PC-9 (cell line): ENCODE measurements at regions of chr5 and their contacts with region 1.

Region 1: DNA sequence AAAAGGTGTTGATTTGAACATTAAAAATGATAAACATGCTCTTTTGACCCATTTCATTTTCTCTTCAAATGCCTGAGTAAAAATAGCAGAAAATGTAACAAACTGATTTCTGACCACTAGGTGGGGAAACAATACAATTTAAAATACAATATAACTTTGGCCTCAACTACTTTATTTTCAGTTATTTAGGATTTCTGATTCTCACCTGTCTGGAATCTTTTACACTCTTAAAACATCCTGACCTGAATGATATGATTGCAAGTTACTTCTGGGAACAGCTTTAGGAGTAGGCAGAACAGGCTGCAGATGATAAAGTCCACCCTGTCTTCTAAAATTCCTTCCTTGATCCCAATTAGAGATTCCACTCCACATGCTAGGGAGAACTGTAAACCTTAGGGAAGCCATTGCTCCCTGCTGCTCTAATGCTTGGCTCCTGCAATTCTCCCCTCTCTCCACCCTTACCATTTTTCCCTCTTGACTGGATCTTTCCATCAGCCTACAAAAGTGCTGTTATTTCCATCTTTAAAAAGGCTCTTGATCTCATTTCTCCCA is 70.3 kb downstream of the FYB1 start:
- DNase-seq: no peak
- H3K4me3 ChIP-seq: no peak overlapping the region
- H3K27ac ChIP-seq: no peak overlapping the region; the same call in 1 of the 2 replicates
- H3K4me1 ChIP-seq: peaks cover 6% of the 10 kb centered on the region
- H3K27me3 ChIP-seq: no peaks in the 10 kb centered on the region
- CTCF ChIP-seq: peak; percentile 76

Region 2: DNA sequence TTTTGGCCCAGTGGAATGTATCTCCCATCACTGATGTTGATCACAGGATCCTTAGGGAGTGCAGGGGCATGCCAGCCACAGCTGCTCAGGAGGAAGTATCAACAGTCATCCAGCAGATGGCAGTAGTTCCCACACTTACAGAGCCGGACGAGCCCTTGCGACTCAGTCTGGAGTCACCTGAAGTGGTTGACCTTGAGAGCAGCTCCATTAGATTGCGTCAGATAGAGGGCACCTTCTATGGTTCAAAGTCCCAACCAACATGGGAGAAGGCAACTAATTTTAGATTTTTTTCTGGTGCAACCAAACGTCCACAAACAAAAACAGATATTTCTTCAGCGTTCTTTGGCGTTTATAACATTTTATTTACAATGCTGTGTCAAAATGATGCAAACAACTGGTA is 766.2 kb before region 1 on chr5:
- CTCF ChIA-PET with region 1: no interaction called
- POLR2A ChIA-PET with region 1: no interaction called
- intact Hi-C with region 1: no loop called
- DNase-seq: peak; percentile 58 to 77
- H3K4me3 ChIP-seq: no peak overlapping the region
- H3K27ac ChIP-seq: no peak overlapping the region
- H3K4me1 ChIP-seq: no peaks in the 10 kb centered on the region
- H3K27me3 ChIP-seq: peaks cover 37% of the 10 kb centered on the region
- CTCF ChIP-seq: peak; percentile 88

Region 3: DNA sequence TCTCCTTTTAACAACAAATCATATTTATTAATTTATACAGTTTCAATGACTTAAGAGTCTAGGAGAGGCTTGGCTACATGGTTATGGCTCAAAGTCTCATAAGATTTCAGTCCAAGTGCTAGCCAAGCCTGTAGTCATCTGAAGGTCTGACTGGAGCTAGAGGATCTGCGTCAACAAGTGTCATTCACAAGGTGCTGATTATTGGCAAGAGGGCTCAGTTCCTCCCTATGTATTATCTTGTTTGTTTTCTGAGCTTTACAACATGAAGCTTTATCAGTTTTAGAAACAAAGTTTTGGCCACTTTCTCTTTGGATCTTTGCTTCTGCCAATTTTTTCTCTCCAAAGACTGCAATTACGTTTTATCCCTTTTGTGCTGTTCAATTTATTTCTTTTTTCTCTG is 169.5 kb before region 1 on chr5:
- CTCF ChIA-PET with region 1: no interaction called
- POLR2A ChIA-PET with region 1: interaction called, 45 read pairs
- intact Hi-C with region 1: no loop called
- DNase-seq: no peak
- H3K4me3 ChIP-seq: no peak overlapping the region
- H3K27ac ChIP-seq: no peak overlapping the region
- H3K4me1 ChIP-seq: peaks cover 9% of the 10 kb centered on the region; the same call in 1 of the 2 replicates
- H3K27me3 ChIP-seq: no peaks in the 10 kb centered on the region
- CTCF ChIP-seq: no peak

Region 4: DNA sequence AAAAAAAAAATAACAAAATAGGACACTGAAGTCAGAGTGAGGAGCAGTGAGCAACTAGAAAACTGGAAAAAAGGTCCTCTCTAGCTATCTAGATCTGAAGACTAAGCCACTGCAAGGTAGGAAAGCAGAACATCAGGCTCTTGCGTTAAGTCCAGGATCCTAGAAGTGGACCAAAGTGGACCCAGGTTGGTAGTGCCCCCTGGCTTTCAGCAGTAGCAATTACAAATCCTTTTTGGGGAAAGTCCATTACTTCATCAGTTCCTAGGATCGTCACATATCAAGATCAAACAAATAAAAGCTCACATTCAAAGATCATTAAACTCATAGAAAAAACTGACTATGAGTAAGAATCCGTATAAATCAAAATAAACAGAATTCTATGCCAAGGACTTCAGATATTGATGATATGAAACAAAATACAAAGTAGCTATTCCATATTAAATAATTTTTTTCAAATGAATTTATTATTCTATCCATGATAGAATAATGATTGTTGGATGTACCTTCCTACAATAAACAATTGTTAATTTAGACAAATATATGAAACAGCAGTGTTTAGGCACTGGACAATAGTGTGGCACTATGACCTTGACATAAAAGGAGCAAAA is 68.4 kb before region 1 on chr5:
- CTCF ChIA-PET with region 1: interaction called, 11 read pairs
- POLR2A ChIA-PET with region 1: no interaction called
- intact Hi-C with region 1: loop called (anchors 2 kb)
- DNase-seq: no peak
- H3K4me3 ChIP-seq: no peak overlapping the region
- H3K27ac ChIP-seq: no peak overlapping the region
- H3K4me1 ChIP-seq: peaks cover 21% of the 10 kb centered on the region
- H3K27me3 ChIP-seq: no peaks in the 10 kb centered on the region
- CTCF ChIP-seq: peak; percentile 76

Region 5: GRCh38 chr5:39283231-39283818 is 134.3 kb after region 1 on chr5:
- CTCF ChIA-PET with region 1: interaction called, 12 read pairs
- POLR2A ChIA-PET with region 1: no interaction called
- intact Hi-C with region 1: loop called (anchors 1 kb)
- DNase-seq: peak; percentile 61 to 64
- H3K4me3 ChIP-seq: no peak overlapping the region
- H3K27ac ChIP-seq: no peak overlapping the region
- H3K4me1 ChIP-seq: no peaks in the 10 kb centered on the region
- H3K27me3 ChIP-seq: no peaks in the 10 kb centered on the region
- CTCF ChIP-seq: peak; percentile 91

Region 6: DNA sequence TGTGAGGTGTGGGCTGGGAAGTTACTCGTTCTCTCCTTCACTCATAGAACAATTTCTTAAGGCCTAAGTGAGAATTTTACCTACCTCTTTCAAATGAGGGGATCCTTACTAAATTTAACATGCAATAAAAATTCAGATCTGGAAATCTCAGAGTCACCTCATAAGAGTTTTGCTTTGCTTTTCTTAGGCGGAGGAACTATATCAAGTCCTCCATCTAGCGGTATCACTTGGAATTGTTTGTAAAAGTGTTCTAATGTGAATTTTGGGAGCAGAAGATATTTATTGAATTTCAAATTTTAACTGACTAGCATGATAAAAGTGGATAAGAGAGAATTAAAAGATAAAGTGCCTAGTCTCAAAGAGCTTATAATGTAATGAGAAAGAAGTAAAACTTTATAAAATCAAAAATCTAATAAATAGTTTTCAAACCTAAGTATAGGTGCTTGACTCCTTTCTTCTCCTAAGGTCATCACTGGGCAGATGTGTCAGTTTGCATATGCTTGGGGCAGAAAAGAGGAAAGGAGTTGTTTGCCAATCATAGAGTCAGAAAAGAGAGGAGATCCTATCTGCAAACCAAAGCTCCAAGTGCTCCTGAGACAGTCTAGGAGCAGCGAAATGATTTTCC is 421.5 kb after region 1 on chr5:
- CTCF ChIA-PET with region 1: no interaction called
- POLR2A ChIA-PET with region 1: no interaction called
- intact Hi-C with region 1: loop called (anchors 2 kb)
- DNase-seq: peak in 1 of 2 experiments; percentile 65
- H3K4me3 ChIP-seq: no peak overlapping the region
- H3K27ac ChIP-seq: no peak overlapping the region
- H3K4me1 ChIP-seq: no peaks in the 10 kb centered on the region
- H3K27me3 ChIP-seq: no peaks in the 10 kb centered on the region
- CTCF ChIP-seq: peak; percentile 94

Region 7: DNA sequence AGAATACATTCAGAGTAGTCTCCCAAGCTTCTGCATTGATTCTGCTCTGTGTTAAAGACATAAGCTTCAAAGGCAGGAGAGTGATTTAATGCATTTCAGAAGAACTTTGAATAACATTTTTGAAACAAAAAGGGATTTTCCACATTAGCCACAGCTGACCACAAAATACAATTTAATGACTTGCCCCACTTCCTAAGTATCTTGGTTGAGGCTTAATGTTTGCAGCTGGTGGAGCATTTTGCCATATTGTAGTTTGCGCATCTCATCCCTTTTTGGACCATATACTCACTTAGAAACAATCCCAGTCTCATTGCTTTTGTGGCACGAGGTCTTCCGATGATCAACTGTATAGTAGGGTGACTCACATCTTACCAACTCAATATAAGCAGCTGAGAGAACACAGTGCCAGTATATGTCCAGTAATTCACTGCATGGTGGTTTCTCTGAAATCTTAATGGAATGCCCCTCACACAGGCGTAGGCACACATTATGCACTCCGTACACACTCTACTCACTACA is 1074.9 kb after region 1 on chr5:
- CTCF ChIA-PET with region 1: no interaction called
- POLR2A ChIA-PET with region 1: no interaction called
- intact Hi-C with region 1: no loop called
- DNase-seq: no peak
- H3K4me3 ChIP-seq: no peak overlapping the region
- H3K27ac ChIP-seq: no peak overlapping the region
- H3K4me1 ChIP-seq: no peaks in the 10 kb centered on the region
- H3K27me3 ChIP-seq: no peaks in the 10 kb centered on the region
- CTCF ChIP-seq: no peak